Endothelial cell of umbilical vein (primary cell): ENCODE measurements at regions of chr12 and their contacts with region 1.

Region 1: GRCh38 chr12:40224439-40225291 is at the start of gene LRRK2:
- DNase-seq: peak; percentile 55
- H3K4me3 ChIP-seq: peak within 1 kb of the TSS; percentile 5 to 67 (median 42)
- H3K27ac ChIP-seq: peak within 1 kb of the TSS; percentile 17
- H3K4me1 ChIP-seq: peaks cover 20% of the 10 kb centered on the region
- H3K27me3 ChIP-seq: no peaks in the 10 kb centered on the region
- CTCF ChIP-seq: no peak
- POLR2A ChIP-seq: no peak
- total RNA-seq, gene LRRK2: 1.3 and 2.2 TPM in 2 replicates

Region 2: GRCh38 chr12:40248585-40249297 is 24.1 kb after region 1 on chr12:
- CTCF ChIA-PET with region 1: no interaction called
- POLR2A ChIA-PET with region 1: no interaction called
- dilution Hi-C with region 1: no loop called
- intact Hi-C with region 1: loop called (anchors 2 kb)
- DNase-seq: no peak
- H3K4me3 ChIP-seq: no peak overlapping the region
- H3K27ac ChIP-seq: no peak overlapping the region
- H3K4me1 ChIP-seq: no peaks in the 10 kb centered on the region
- H3K27me3 ChIP-seq: no peaks in the 10 kb centered on the region
- CTCF ChIP-seq: no peak
- POLR2A ChIP-seq: no peak